ENCODE measurements at regions of chr5 and their contacts with region 1.

Region 1: GRCh38 chr5:42423285-42424165 is at the start of gene GHR:
- DNase-seq: peak; percentile 78
- H3K4me3 ChIP-seq: peak within 1 kb of the TSS; percentile 49 to 70
- H3K27ac ChIP-seq: no peak within 1 kb of the TSS
- H3K4me1 ChIP-seq: no peaks in the 10 kb centered on the region; a peak in 1 of 4 replicates
- H3K27me3 ChIP-seq: peaks cover 12% of the 10 kb centered on the region
- CTCF ChIP-seq: peak; percentile 72
- EP300 ChIP-seq: no peak
- RAD21 ChIP-seq: peak; percentile 62
- polyA plus RNA-seq, gene GHR: 0.02 and 0.03 TPM in 2 replicates

Region 2: DNA sequence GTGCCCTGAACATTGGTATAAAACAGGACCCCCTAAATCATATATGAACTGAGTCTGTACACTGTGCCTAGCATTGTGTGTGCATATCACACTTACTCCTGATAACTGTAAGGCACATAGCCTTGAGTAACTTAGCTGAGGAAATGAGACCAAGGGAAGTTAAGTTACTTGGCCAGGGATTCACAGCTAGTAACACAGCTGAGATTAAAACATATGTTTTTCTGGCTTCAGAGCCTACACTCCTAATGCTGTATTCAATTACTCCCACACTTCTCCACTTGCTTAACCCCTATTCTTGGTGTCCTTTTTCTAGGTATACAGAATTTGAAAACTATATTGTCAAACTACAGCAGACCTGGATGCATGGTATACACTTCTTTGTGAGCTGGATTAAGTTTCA is 12.5 kb after region 1 on chr5:
- CTCF ChIA-PET with region 1: interaction called, 12 read pairs
- POLR2A ChIA-PET with region 1: no interaction called
- DNase-seq: no peak
- H3K4me3 ChIP-seq: no peak overlapping the region
- H3K27ac ChIP-seq: no peak overlapping the region
- H3K4me1 ChIP-seq: no peaks in the 10 kb centered on the region
- H3K27me3 ChIP-seq: no peaks in the 10 kb centered on the region
- CTCF ChIP-seq: no peak
- EP300 ChIP-seq: no peak
- RAD21 ChIP-seq: no peak

Region 3: GRCh38 chr5:42583322-42583721 is 159.8 kb after region 1 on chr5:
- CTCF ChIA-PET with region 1: interaction called, 13 read pairs
- POLR2A ChIA-PET with region 1: no interaction called
- DNase-seq: peak; percentile 37
- H3K4me3 ChIP-seq: no peak overlapping the region; a peak in 1 of 4 replicates
- H3K27ac ChIP-seq: no peak overlapping the region
- H3K4me1 ChIP-seq: no peaks in the 10 kb centered on the region
- H3K27me3 ChIP-seq: no peaks in the 10 kb centered on the region; the same call in none of the 2 replicates
- CTCF ChIP-seq: peak; percentile 85
- EP300 ChIP-seq: no peak
- RAD21 ChIP-seq: peak; percentile 59

Region 4: GRCh38 chr5:42767491-42768105 is 344.1 kb after region 1 on chr5:
- CTCF ChIA-PET with region 1: interaction called, 20 read pairs
- POLR2A ChIA-PET with region 1: no interaction called
- DNase-seq: peak; percentile 21
- H3K4me3 ChIP-seq: no peak overlapping the region
- H3K27ac ChIP-seq: no peak overlapping the region
- H3K4me1 ChIP-seq: no peaks in the 10 kb centered on the region
- H3K27me3 ChIP-seq: no peaks in the 10 kb centered on the region
- CTCF ChIP-seq: peak; percentile 68
- EP300 ChIP-seq: no peak
- RAD21 ChIP-seq: peak; percentile 76

Region 5: GRCh38 chr5:42889311-42889933 is 465.9 kb after region 1 on chr5:
- CTCF ChIA-PET with region 1: interaction called, 12 read pairs
- POLR2A ChIA-PET with region 1: no interaction called
- DNase-seq: peak; percentile 57
- H3K4me3 ChIP-seq: no peak overlapping the region
- H3K27ac ChIP-seq: no peak overlapping the region
- H3K4me1 ChIP-seq: no peaks in the 10 kb centered on the region
- H3K27me3 ChIP-seq: peaks cover 19% of the 10 kb centered on the region; the same call in 1 of the 2 replicates
- CTCF ChIP-seq: peak; percentile 79
- EP300 ChIP-seq: no peak
- RAD21 ChIP-seq: peak; percentile 79

Measured in SK-N-SH (cell line).